Esophagus muscularis mucosa (tissue), 4 donors: ENCODE measurements at regions of chr2 and their contacts with region 1.

Region 1: DNA sequence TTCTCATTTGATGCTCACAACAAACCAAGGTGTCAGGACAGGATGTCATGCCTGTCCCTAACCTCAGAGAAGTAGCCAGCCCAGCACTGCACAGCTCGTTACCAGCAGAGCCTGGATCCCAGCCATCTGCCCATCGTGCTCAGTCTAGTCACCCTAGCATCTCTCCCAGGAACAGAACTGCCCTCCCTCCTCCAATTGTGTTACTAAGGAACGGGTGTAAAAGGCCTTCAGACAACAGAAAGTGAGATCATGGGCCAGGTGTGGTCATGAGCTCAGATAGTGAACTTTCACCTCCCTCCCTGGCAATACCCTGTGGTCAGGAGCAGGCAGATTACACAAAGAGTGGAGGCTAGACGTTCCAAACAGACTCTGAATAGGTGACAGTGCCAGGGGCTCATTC is 111.8 kb upstream of the PPP1CB start:
- DNase-seq: no peak
- H3K4me3 ChIP-seq: no peak overlapping the region
- H3K27ac ChIP-seq: peak overlapping the region; percentile 92 to 98 (median 96)
- H3K4me1 ChIP-seq: peaks cover 25 to 83% (median 80%) of the 10 kb centered on the region in 4 donors
- H3K27me3 ChIP-seq: no peaks in the 10 kb centered on the region
- CTCF ChIP-seq: no peak
- EP300 ChIP-seq: peak; percentile 29
- POLR2A ChIP-seq: no peak

Region 2: GRCh38 chr2:28558158-28558820 is 81.5 kb before region 1 on chr2:
- intact Hi-C with region 1: no loop called
- DNase-seq: no peak
- H3K4me3 ChIP-seq: no peak overlapping the region
- H3K27ac ChIP-seq: no peak overlapping the region
- H3K4me1 ChIP-seq: no peaks in the 10 kb centered on the region
- H3K27me3 ChIP-seq: no peaks in the 10 kb centered on the region
- CTCF ChIP-seq: no peak
- EP300 ChIP-seq: no peak
- POLR2A ChIP-seq: no peak

Region 3: GRCh38 chr2:28594289-28595108 is 45.3 kb before region 1 on chr2:
- intact Hi-C with region 1: loop called (anchors 5 kb)
- DNase-seq: peak; percentile 98
- H3K4me3 ChIP-seq: peak overlapping the region; percentile 11 to 25 (median 18)
- H3K27ac ChIP-seq: peak overlapping the region; percentile 85 to 94 (median 92)
- H3K4me1 ChIP-seq: peaks cover 34 to 58% (median 53%) of the 10 kb centered on the region in 4 donors
- H3K27me3 ChIP-seq: no peaks in the 10 kb centered on the region
- CTCF ChIP-seq: peak; percentile 77 to 92 (median 86)
- EP300 ChIP-seq: no peak
- POLR2A ChIP-seq: no peak